Right lobe of liver (tissue), 6 donors: ENCODE measurements at regions of chr5 and their contacts with region 1.

Region 1: DNA sequence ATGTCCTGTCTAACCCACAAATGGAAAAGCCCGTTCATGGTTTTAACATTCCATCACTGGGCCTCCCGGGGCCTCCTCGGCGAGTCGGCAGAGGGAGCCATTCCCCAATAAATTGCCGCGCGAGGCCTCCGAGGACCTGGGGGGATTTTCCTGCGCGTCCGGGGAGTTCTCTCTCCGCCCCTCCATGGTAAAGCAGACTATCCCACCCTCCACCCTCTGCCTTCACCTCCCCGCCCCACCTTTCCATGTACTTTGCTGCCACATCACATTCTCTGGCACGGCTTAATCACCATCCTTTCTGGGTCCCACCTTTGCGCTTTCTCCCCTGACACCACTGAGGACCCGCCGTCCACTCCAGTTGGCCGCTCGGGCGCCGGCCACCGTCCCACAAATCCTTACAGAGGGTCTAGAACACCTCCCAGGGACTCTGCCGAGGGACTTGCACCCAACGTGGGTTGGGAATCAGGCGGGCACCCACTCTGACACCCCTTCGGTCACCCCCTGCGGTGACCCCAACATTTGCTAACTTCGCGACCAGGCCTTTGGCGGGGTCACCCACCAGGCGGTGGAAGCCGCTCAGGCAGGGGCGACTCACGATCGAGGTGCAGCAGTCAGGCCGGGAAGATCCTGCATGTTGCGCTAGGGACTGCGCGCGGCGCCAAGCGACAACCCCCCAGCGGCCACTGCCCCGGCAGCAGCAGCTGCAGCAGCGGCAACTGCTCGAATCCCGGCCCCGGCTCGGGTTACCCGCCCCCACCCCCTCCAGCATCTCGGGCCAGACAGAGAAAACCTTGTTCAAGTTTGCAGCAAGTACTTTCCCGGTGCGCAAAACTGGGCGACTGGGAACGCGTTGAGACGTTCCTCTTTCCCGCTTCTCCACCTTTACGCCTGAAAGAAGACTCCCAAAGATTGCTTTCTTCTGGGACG is at the start of gene MEGF10:
- DNase-seq: peak in 2 of 3 donors; percentile 48 to 60
- ATAC-seq: peak; percentile 72 to 93 (median 81)
- H3K4me3 ChIP-seq: peak within 1 kb of the TSS in 2 of 3 donors; percentile 12
- H3K27ac ChIP-seq: no peak within 1 kb of the TSS
- H3K4me1 ChIP-seq: peaks cover 0 to 7% (median 0%) of the 10 kb centered on the region in 4 donors
- H3K27me3 ChIP-seq: peaks cover 4 to 6% of the 10 kb centered on the region in 2 donors
- CTCF ChIP-seq: peak; percentile 32 to 82 (median 70)
- POLR2A ChIP-seq: no peak
- total RNA-seq, gene MEGF10: 0.42 to 1.4 (median 0.75) TPM

Region 2: GRCh38 chr5:127216898-127217675 is 73.2 kb before region 1 on chr5:
- intact Hi-C with region 1: no loop called
- DNase-seq: no peak
- ATAC-seq: no peak
- H3K4me3 ChIP-seq: no peak overlapping the region
- H3K27ac ChIP-seq: no peak overlapping the region
- H3K4me1 ChIP-seq: no peaks in the 10 kb centered on the region
- H3K27me3 ChIP-seq: no peaks in the 10 kb centered on the region
- CTCF ChIP-seq: no peak
- POLR2A ChIP-seq: no peak

Region 3: DNA sequence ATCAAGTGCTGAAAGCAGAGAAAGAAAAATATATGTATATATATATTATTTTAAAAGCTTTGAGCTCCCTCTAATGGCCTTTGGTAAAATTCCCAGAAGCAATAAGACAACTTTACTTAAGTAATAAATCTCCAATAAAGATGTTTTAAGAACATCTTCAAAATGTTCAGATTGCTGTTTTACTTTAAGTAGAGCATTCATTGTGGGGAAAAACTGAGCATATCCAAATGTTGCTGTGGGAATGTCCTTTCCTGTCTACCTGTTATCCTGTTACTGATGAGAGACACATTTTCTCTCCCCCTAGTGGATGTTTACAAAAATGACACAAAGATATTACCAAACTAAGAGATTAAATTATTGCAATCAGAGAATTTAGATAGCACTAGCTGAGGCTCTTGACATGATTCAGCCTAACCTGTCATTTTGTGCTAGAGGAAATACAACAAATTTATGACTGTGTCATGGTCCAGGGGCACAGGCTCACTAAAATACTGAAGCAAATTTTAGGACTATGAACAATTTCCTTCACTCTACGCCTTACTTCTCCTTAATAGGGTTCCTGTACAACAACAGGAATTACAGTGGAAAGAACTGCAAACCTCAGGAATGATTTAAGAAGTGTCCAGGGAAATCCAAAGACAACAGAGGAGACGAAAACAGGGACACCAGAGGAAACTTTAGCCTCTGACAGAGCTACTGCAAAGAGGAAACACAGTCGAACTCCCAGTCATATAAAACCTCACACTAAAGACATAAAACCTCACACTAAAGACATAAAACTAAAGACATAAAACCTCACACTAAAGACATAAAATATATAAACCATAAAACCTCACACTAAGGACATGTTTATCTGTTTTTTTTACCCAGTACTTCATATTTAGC is 202.8 kb after region 1 on chr5:
- intact Hi-C with region 1: loop called in 1 of 2 experiments (anchors 10 kb)
- DNase-seq: no peak
- ATAC-seq: peak; percentile 69 to 85 (median 78)
- H3K4me3 ChIP-seq: no peak overlapping the region
- H3K27ac ChIP-seq: no peak overlapping the region
- H3K4me1 ChIP-seq: no peaks in the 10 kb centered on the region
- H3K27me3 ChIP-seq: no peaks in the 10 kb centered on the region
- CTCF ChIP-seq: peak; percentile 67 to 81 (median 71)
- POLR2A ChIP-seq: no peak

Region 4: GRCh38 chr5:127536687-127537086 is 246.4 kb after region 1 on chr5:
- intact Hi-C with region 1: no loop called
- DNase-seq: no peak
- ATAC-seq: no peak
- H3K4me3 ChIP-seq: no peak overlapping the region
- H3K27ac ChIP-seq: no peak overlapping the region
- H3K4me1 ChIP-seq: no peaks in the 10 kb centered on the region
- H3K27me3 ChIP-seq: no peaks in the 10 kb centered on the region
- CTCF ChIP-seq: peak in 3 of 4 donors; percentile 22 to 45 (median 44)
- POLR2A ChIP-seq: no peak